IMR-90 (cell line): ENCODE measurements at regions of chrX and their contacts with region 1.

Region 1: GRCh38 chrX:38768079-38768478 is 33.2 kb upstream of the MID1IP1 start:
- DNase-seq: peak; percentile 33
- ATAC-seq: 0 out of 2 replicates have a peak, but pooled peaks have one; percentile 37
- H3K4me3 ChIP-seq: no peak overlapping the region
- H3K27ac ChIP-seq: no peak overlapping the region
- H3K4me1 ChIP-seq: no peaks in the 10 kb centered on the region
- H3K27me3 ChIP-seq: peaks cover 5% of the 10 kb centered on the region
- CTCF ChIP-seq: peak; percentile 62
- POLR2A ChIP-seq: no peak
- RAD21 ChIP-seq: peak; percentile 81

Region 2: GRCh38 chrX:38654302-38654701 is 113.8 kb before region 1 on chrX:
- CTCF ChIA-PET with region 1: no interaction called
- POLR2A ChIA-PET with region 1: no interaction called
- dilution Hi-C with region 1: no loop called
- in situ Hi-C with region 1: no loop called
- intact Hi-C with region 1: no loop called
- DNase-seq: peak; percentile 14
- ATAC-seq: peak; percentile 48; the same call in 1 of the 2 replicates
- H3K4me3 ChIP-seq: no peak overlapping the region
- H3K27ac ChIP-seq: no peak overlapping the region
- H3K4me1 ChIP-seq: no peaks in the 10 kb centered on the region
- H3K27me3 ChIP-seq: peaks cover 11% of the 10 kb centered on the region
- CTCF ChIP-seq: peak; percentile 40; the same call in 1 of the 2 replicates
- POLR2A ChIP-seq: no peak
- RAD21 ChIP-seq: no peak

Region 3: GRCh38 chrX:38999967-39000745 is 232.1 kb after region 1 on chrX:
- CTCF ChIA-PET with region 1: no interaction called
- POLR2A ChIA-PET with region 1: no interaction called
- dilution Hi-C with region 1: no loop called
- in situ Hi-C with region 1: loop called (anchors 10 kb)
- intact Hi-C with region 1: no loop called
- DNase-seq: peak; percentile 31
- ATAC-seq: no peak
- H3K4me3 ChIP-seq: no peak overlapping the region
- H3K27ac ChIP-seq: no peak overlapping the region
- H3K4me1 ChIP-seq: no peaks in the 10 kb centered on the region
- H3K27me3 ChIP-seq: peaks cover 8% of the 10 kb centered on the region; the same call in 1 of the 2 replicates
- CTCF ChIP-seq: no peak
- POLR2A ChIP-seq: no peak
- RAD21 ChIP-seq: no peak